ENCODE measurements at regions of chr11 and their contacts with region 1.

Region 1: GRCh38 chr11:103108933-103109817 is at the start of gene DYNC2H1:
- DNase-seq: peak; percentile 92
- H3K4me3 ChIP-seq: peak within 1 kb of the TSS; percentile 67
- H3K27ac ChIP-seq: no peak within 1 kb of the TSS
- H3K4me1 ChIP-seq: peaks cover 11% of the 10 kb centered on the region
- CTCF ChIP-seq: peak; percentile 74
- total RNA-seq, gene DYNC2H1: 0.41 and 1.1 TPM in 2 replicates

Region 2: DNA sequence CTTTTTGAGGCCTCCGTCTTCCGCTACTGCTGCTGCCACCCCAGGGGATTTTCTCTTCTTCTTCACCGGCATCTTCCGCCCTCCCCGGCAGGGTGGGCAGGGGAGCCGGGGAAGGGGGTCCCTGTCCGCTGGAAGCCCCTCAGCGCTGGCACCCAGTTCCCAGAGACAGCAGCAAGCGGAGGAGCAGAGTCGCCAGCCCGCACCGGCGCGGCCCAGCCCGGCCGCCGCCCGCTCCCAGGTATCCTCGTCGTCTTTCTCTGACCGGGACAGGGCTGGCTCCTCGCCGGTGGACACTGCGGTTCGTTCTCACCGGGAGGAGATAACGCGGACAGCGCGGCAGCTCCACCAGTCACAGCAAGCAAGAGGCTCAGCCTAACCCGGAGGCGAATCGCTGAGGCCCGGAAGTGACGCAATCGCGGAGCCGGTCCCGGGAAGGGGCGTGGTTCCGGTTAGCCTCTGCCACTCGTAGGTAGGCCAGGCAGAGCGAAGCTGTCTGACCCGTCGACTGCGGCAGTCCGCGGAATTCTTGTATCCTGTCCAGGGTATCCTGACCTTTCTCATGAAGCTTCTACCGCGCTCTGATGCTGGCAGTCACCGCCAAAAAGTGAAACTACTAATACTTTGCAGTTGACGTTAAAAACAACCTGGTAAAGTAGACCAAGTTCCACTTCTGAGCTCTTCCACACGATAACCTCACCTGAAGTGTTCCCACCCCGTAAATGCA is 17.2 kb before region 1 on chr11 and contains the start of gene DCUN1D5:
- CTCF ChIA-PET with region 1: interaction called, 6 read pairs
- POLR2A ChIA-PET with region 1: interaction called, 35 read pairs
- intact Hi-C with region 1: loop called (anchors 2 kb)
- DNase-seq: peak; percentile 95
- H3K4me3 ChIP-seq: peak within 1 kb of the TSS; percentile 95
- H3K27ac ChIP-seq: peak within 1 kb of the TSS; percentile 55
- H3K4me1 ChIP-seq: peaks cover 30% of the 10 kb centered on the region
- CTCF ChIP-seq: no peak
- total RNA-seq, gene DCUN1D5: 70.4 and 73.9 TPM in 2 replicates

Region 3: GRCh38 chr11:103433386-103434380 is 324.5 kb after region 1 on chr11:
- CTCF ChIA-PET with region 1: no interaction called
- POLR2A ChIA-PET with region 1: no interaction called
- intact Hi-C with region 1: no loop called
- DNase-seq: no peak
- H3K4me3 ChIP-seq: no peak overlapping the region
- H3K27ac ChIP-seq: no peak overlapping the region
- H3K4me1 ChIP-seq: no peaks in the 10 kb centered on the region
- CTCF ChIP-seq: no peak

Measured in OCI-LY7 (cell line).